Activated CD4-positive, alpha-beta T cell treated with anti-CD3 and anti-CD28 coated beads for 36 hours (primary cell): ENCODE measurements at regions of chr14 and their contacts with region 1.

Region 1: DNA sequence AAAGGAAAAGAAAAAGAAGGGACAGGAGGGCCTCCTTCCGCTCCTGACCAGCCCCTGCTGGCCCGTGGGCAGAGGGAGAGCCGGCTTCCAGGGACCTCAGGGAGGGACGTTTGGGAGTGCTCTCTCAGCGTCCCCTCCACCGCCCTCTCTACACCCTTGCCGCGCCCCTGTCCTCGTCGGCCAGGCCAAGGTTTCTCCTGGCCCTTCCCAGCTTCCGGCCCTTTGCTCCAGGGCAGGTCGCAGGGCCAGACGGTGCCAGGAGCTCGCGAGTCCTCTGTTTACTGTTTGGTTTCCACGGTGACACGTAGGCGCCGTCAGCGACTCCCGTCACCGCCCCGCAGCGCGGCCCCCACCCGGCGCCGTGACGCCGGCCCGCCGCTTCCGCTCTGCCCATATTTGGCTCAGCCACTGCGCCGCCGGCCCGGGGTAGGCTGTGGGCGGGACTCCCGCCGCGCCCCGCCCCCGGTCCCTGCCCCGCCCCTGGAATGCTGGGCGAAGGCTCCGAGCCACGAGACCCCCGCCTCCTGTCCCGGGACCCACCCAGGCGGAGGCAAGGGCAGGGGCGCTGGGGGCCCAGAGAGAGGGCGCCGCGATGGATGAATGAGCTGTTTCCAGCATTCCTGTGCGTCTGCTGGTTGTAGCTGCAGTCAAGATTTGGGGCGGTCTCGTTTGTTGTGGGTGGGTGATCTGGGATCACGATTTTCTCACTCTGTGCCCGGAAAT is 15.5 kb downstream of the FOS start:
- DNase-seq: peak; percentile 97
- ATAC-seq: peak; percentile 96
- H3K4me3 Mint-ChIP-seq: peak overlapping the region; percentile 73
- H3K27ac Mint-ChIP-seq: peak overlapping the region; percentile 85
- H3K4me1 Mint-ChIP-seq: peaks cover 22% of the 10 kb centered on the region
- H3K27me3 Mint-ChIP-seq: peaks cover 3% of the 10 kb centered on the region

Region 2: GRCh38 chr14:74945823-74946682 is 348.0 kb before region 1 on chr14:
- CTCF ChIA-PET with region 1: no interaction called
- POLR2A ChIA-PET with region 1: no interaction called
- intact Hi-C with region 1: loop called in 1 of 2 experiments (anchors 10 kb)
- DNase-seq: peak; percentile 87
- ATAC-seq: peak; percentile 69
- H3K4me3 Mint-ChIP-seq: no peak overlapping the region
- H3K27ac Mint-ChIP-seq: no peak overlapping the region
- H3K4me1 Mint-ChIP-seq: peaks cover 28% of the 10 kb centered on the region
- H3K27me3 Mint-ChIP-seq: no peaks in the 10 kb centered on the region

Region 3: DNA sequence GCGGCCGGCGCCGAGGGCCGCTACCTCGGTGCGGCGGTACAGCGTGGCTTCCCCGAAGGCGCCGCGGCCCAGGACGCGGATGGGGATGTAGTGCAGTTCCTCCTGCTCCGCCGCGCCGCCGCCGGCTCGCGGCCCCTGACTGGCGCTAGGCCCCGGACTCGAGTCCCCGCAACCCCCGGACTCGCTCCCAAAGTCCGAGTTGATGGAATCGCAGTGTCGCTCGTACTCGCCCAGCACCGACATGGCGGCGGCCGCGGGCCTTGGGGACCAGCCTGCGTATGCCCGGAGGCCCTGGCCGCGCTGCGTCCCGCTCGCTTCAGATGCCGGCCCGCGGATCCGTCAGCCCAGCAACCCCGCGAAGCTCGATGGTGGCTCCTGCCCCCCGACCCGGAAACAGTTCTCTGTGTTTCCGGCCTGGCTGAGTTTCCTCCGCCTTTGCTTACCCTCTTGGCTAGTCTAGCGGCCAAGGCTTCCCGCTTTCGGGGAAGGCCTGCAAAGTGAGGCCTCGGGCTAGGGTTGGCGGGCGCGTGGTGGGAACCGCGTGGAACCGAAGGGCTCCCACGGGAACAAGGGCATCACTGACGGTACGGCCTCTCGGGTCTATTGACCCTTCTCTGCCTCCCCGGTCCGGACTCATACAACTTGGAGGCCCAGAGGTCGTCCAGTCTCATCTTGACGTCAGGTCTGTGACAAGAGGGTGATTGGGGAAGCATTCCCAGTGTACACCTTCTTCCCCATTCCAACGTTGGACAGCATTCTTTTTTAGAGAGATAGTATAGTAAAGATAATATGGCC is 167.2 kb before region 1 on chr14 and contains the start of gene NEK9:
- CTCF ChIA-PET with region 1: interaction called, 125 read pairs
- POLR2A ChIA-PET with region 1: interaction called, 7 read pairs
- intact Hi-C with region 1: loop called (anchors 1 kb)
- DNase-seq: peak; percentile 94
- ATAC-seq: peak; percentile 90
- H3K4me3 Mint-ChIP-seq: peak within 1 kb of the TSS; percentile 97
- H3K27ac Mint-ChIP-seq: peak within 1 kb of the TSS; percentile 98
- H3K4me1 Mint-ChIP-seq: peaks cover 41% of the 10 kb centered on the region
- H3K27me3 Mint-ChIP-seq: no peaks in the 10 kb centered on the region
- total RNA-seq, gene NEK9: 45.2 to 58.7 TPM

Region 4: DNA sequence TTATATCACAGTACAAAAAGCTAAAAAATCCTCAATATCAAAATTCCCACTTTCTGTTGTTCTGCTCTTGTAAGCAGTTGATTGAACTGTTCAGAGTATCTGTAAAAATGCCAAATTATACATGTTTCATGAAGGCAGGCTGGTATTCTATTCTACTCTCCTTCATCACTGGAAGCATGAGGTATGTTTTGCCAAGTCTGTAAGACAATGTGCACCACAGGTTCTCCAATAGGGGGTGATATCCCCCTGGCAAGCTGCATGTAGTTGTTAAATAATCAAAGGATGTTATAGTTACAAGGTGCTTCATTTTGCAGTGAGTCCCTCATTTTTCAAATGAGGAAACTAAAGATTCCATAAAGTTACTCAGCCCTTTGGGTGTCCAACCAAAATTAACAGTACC is 152.1 kb before region 1 on chr14:
- CTCF ChIA-PET with region 1: interaction called, 221 read pairs
- POLR2A ChIA-PET with region 1: interaction called, 4 read pairs
- intact Hi-C with region 1: no loop called
- DNase-seq: peak; percentile 38
- ATAC-seq: peak; percentile 71
- H3K4me3 Mint-ChIP-seq: no peak overlapping the region
- H3K27ac Mint-ChIP-seq: no peak overlapping the region
- H3K4me1 Mint-ChIP-seq: peaks cover 58% of the 10 kb centered on the region
- H3K27me3 Mint-ChIP-seq: no peaks in the 10 kb centered on the region

Region 5: GRCh38 chr14:75258615-75259466 is 35.2 kb before region 1 on chr14:
- CTCF ChIA-PET with region 1: interaction called, 13 read pairs
- POLR2A ChIA-PET with region 1: interaction called, 7 read pairs
- intact Hi-C with region 1: loop called (anchors 1 kb)
- DNase-seq: peak; percentile 99
- ATAC-seq: peak; percentile 98
- H3K4me3 Mint-ChIP-seq: peak overlapping the region; percentile 77
- H3K27ac Mint-ChIP-seq: peak overlapping the region; percentile 97
- H3K4me1 Mint-ChIP-seq: peaks cover 24% of the 10 kb centered on the region
- H3K27me3 Mint-ChIP-seq: no peaks in the 10 kb centered on the region

Region 6: DNA sequence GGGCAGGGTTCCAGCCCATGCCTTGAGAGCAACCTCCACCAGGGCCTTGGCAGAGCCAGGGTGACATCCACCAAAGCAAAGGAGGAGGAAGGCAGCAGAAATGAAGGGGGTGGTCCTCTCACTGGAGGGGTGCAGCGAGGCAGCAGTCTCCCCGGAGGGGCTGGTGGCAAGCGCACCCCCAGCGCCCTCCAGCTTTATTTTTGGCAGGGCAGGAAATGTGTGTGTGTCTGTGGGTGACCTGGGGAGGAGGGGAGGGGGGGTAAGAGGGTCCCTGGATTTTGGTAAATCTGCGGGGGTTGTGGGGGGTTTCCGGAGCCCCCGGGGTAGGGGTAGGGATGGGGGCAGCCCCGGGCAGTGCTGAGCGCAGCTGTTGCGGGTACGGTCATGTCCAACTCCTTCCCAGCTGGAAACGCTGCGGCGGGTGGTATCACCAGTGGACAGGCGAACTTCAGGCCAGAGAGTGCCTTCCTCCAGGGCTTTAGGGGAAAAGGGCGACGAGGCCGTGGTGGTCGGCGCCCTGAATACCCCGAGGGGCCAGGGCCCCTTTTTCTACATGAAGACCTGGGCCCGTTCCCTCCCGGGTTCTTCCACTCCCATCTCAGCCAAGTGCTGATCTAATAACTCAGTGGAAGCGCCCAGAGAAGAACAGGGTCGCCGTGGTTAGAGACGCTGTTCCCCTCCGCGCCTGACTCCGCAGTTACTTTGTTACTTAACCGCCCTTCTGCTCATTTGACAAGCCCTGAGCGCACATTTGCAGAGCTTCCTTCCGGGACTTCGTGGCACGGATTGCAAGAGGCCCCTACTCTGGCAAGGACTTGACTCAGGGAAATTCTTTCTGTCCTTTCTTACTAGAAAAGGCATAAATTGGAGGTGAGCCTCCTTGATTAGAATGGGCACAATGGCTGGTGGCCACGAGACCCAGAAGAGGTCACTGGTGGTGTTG is 39.8 kb after region 1 on chr14:
- CTCF ChIA-PET with region 1: no interaction called
- POLR2A ChIA-PET with region 1: no interaction called
- intact Hi-C with region 1: loop called in 1 of 2 experiments (anchors 1 kb)
- DNase-seq: peak; percentile 69
- ATAC-seq: peak; percentile 77
- H3K4me3 Mint-ChIP-seq: peak overlapping the region; percentile 41
- H3K27ac Mint-ChIP-seq: peak overlapping the region; percentile 82
- H3K4me1 Mint-ChIP-seq: peaks cover 27% of the 10 kb centered on the region
- H3K27me3 Mint-ChIP-seq: no peaks in the 10 kb centered on the region